CD4-positive, alpha-beta T cell (primary cell): ENCODE measurements at regions of chr20 and their contacts with region 1.

Region 1: DNA sequence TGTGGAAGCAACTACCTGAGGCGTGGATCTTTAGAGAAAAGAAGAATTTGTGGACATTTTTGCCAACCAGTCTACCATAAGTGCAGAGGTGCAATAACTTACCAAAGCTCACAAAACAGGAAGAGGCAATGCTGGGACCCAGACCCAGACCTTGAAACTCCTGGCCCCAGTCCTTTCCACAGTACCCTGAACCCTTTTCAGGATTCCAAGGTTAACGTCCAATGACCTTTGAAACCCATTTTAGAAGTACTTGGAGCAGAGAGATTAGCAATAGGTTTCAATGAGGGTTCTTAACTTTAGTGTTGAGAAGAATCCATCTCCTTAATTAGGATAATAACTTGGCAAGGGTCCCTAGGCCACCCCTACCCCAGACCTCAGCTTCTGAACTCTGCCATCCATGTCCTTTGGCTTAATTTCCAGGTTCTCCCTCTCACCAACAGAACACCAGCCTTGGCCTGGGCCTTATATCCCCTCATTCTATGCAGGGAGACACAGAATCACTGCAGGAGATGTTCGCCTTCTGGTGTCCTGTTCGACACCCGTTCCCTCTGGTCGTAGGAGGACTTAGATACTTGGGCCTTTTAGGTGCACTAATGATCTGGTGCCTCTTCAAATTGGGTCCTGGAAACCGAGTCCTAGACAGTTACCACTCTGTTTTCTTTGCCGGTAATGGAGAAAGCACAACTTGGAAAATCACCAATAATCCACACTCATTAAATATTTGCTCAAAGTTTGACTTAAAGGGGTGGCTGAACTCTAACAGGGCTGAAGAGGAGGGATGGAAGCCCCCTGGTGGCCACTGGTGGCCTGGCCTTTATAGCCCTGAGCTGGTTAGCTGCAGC is 40.6 kb downstream of the ISM1 start:
- DNase-seq: peak; percentile 45 to 84 (median 67)
- ATAC-seq: peak; percentile 93
- H3K4me3 ChIP-seq: no peak overlapping the region
- H3K4me3 Mint-ChIP-seq: no peak overlapping the region
- H3K27ac ChIP-seq: no peak overlapping the region
- H3K27ac Mint-ChIP-seq: no peak overlapping the region
- H3K4me1 ChIP-seq: peaks cover 15% of the 10 kb centered on the region
- H3K4me1 Mint-ChIP-seq: peaks cover 39% of the 10 kb centered on the region
- H3K27me3 ChIP-seq: no peaks in the 10 kb centered on the region
- H3K27me3 Mint-ChIP-seq: no peaks in the 10 kb centered on the region
- CTCF ChIP-seq: peak; percentile 73

Region 2: DNA sequence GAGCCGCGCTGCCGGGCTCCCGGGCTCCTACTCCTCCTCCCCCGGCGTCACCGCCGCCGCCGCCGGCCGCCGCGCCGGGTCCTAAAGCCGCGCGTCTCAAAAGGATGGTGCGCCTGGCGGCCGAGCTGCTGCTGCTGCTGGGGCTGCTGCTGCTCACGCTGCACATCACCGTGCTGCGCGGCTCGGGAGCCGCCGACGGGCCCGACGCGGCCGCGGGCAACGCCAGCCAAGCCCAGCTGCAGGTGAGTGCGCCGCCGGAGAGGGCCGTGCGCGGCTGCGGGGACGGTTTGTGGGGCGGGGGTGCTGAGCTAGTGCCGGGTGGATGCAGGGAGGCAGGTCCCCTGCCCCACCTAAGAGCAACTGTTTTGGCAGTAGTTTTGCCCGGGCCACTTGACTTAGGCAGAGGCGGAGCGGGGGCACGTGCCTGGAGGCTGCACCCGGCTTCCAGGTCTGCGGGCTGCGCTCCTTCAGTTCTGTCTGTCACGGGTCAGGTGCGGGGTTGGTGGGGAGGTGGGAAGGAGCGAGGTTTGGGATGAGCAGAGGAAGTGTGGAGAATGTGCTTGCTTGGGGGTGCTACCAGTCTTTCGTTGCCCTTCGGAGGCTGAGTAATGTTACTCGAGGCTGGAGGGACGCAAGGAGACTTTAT is 39.9 kb before region 1 on chr20:
- CTCF ChIA-PET with region 1: interaction called, 3 read pairs
- POLR2A ChIA-PET with region 1: interaction called, 7 read pairs
- intact Hi-C with region 1: loop called in 1 of 2 experiments (anchors 1 kb)
- DNase-seq: peak; percentile 42 to 88 (median 67)
- ATAC-seq: peak; percentile 83
- H3K4me3 ChIP-seq: peak overlapping the region; percentile 57
- H3K4me3 Mint-ChIP-seq: peak overlapping the region; percentile 91
- H3K27ac ChIP-seq: no peak overlapping the region
- H3K27ac Mint-ChIP-seq: peak overlapping the region; percentile 62
- H3K4me1 ChIP-seq: peaks cover 29% of the 10 kb centered on the region
- H3K4me1 Mint-ChIP-seq: peaks cover 21% of the 10 kb centered on the region
- H3K27me3 ChIP-seq: peaks cover 13 to 23% of the 10 kb centered on the region in 2 experiments
- H3K27me3 Mint-ChIP-seq: peaks cover 40% of the 10 kb centered on the region
- CTCF ChIP-seq: no peak

Region 3: DNA sequence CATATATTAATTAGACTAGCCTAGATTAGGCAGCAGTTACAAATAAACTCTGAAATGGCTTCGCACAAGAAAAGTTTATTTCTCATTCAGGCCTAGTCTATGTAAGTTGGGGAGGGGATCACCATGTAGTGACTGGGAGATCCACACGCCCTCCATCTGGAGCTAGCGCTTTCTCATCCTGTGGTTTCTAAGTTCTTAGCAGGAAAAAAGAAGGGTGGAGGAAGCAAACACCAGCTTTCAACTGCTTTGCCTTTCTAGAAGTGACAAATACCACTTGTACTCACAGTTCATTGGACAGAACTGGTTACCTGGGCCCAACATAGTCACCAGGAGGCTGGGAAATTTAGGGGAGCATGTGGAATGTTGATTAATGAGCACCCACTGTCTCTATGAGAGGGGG is 569.8 kb after region 1 on chr20:
- CTCF ChIA-PET with region 1: no interaction called
- POLR2A ChIA-PET with region 1: no interaction called
- intact Hi-C with region 1: no loop called
- DNase-seq: no peak
- ATAC-seq: no peak
- H3K4me3 ChIP-seq: no peak overlapping the region
- H3K4me3 Mint-ChIP-seq: no peak overlapping the region
- H3K27ac ChIP-seq: no peak overlapping the region
- H3K27ac Mint-ChIP-seq: no peak overlapping the region
- H3K4me1 ChIP-seq: no peaks in the 10 kb centered on the region
- H3K4me1 Mint-ChIP-seq: no peaks in the 10 kb centered on the region
- H3K27me3 ChIP-seq: no peaks in the 10 kb centered on the region
- H3K27me3 Mint-ChIP-seq: peaks cover 8% of the 10 kb centered on the region
- CTCF ChIP-seq: no peak